ENCODE measurements at regions of chr16 and their contacts with region 1.

Region 1: GRCh38 chr16:24499193-24499814 is 40.1 kb upstream of the RBBP6 start:
- DNase-seq: peak; percentile 39
- H3K4me3 ChIP-seq: no peak overlapping the region
- H3K27ac ChIP-seq: no peak overlapping the region
- H3K4me1 ChIP-seq: no peaks in the 10 kb centered on the region
- H3K27me3 ChIP-seq: peaks cover 2% of the 10 kb centered on the region
- CTCF ChIP-seq: peak; percentile 37 to 54

Region 2: GRCh38 chr16:24041826-24042631 is 457.3 kb before region 1 on chr16:
- CTCF ChIA-PET with region 1: interaction called, 7 read pairs
- dilution Hi-C with region 1: no loop called
- in situ Hi-C with region 1: loop called in 1 of 2 experiments (anchors 5 kb)
- intact Hi-C with region 1: loop called (anchors 1 kb)
- DNase-seq: peak; percentile 44
- H3K4me3 ChIP-seq: no peak overlapping the region
- H3K27ac ChIP-seq: no peak overlapping the region
- H3K4me1 ChIP-seq: no peaks in the 10 kb centered on the region
- H3K27me3 ChIP-seq: no peaks in the 10 kb centered on the region
- CTCF ChIP-seq: peak; percentile 69 to 87

Region 3: DNA sequence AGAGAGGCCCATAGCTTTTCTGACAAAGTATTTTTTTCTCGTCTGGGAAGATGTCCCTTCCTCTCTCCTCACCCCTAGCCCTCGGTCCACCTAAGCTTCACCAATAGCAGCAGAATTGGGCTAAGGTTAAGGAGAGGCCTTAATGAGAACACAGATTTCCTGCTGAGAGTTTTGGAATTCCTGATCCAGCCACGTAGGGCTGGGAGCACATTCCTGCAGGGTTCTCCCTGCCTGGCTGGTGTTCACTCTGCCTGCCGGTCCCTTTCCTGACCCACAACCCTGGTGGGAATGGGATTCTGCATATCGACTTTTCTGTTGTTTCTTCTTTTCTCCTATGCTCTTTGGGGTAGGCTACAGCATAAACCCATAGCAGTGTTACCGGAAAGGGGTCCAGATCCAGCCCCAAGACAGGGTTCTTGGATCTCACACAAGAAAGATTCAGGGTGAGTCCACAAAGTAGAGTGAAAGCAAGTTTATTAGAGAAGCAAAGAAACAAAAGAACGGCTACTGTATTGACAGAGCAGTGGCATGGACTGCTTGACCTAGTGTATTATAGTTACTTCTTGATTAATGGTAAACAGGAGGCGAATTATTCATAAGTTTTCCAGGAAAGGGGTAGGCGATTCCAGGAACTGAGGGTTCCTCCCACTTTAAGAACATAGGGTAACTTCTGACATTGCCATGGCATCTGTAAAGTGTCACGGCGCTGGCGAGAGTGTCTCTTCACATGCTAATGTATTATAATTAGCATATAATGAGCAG is 150.2 kb before region 1 on chr16:
- CTCF ChIA-PET with region 1: no interaction called
- dilution Hi-C with region 1: no loop called
- in situ Hi-C with region 1: no loop called
- intact Hi-C with region 1: no loop called
- DNase-seq: no peak
- H3K4me3 ChIP-seq: no peak overlapping the region
- H3K27ac ChIP-seq: no peak overlapping the region
- H3K4me1 ChIP-seq: no peaks in the 10 kb centered on the region
- H3K27me3 ChIP-seq: no peaks in the 10 kb centered on the region
- CTCF ChIP-seq: no peak

Region 4: GRCh38 chr16:24544640-24545039 is 45.3 kb after region 1 on chr16:
- CTCF ChIA-PET with region 1: no interaction called
- dilution Hi-C with region 1: no loop called
- in situ Hi-C with region 1: no loop called
- intact Hi-C with region 1: no loop called
- DNase-seq: no peak
- H3K4me3 ChIP-seq: no peak overlapping the region
- H3K27ac ChIP-seq: no peak overlapping the region
- H3K4me1 ChIP-seq: peaks cover 15% of the 10 kb centered on the region
- H3K27me3 ChIP-seq: no peaks in the 10 kb centered on the region
- CTCF ChIP-seq: no peak